GM10248 (cell line): ENCODE measurements at regions of chr11 and their contacts with region 1.

Region 1: DNA sequence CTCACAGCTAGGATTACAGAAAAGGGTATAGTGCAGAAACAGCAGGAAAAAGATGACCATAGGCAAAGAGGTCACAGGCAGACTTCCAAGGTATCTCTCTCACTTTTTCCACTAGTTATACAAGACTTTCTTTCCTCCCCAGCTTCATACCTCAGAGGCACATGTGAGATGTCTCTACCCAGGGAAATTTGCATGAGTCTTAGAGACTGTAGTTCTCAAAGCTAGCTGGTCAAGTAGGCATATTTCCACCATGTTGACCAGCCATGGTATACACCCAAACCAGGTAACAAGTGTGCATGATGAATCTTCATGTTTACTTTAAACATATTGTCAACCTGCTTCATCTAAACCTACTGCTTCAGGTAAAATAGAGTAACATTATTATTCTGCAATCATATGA is 27.9 kb downstream of the PRMT3 start:
- DNase-seq: no peak
- CTCF ChIP-seq: no peak

Region 2: DNA sequence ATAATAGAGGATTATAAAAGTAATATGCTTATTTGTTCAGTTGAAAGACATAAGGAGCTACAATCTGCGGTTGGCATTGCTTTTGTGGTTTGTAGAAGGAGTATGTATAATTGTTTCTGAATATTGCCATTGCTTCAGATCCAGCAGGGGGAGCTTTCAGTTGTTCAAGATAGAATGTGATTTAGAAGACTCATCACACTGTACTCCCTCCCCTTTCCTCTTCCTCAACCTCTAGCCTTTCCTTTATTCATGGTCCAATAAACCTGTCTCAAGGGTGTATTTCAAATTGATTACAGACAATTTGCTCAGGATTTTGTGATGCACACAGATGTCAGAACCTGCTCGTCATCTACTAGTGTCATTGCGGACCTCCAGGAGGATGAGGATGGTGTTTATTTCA is 18.2 kb before region 1 on chr11:
- CTCF ChIA-PET with region 1: interaction called, 22 read pairs
- POLR2A ChIA-PET with region 1: no interaction called
- DNase-seq: peak; percentile 37
- CTCF ChIP-seq: peak; percentile 36